Right cardiac atrium (tissue), 5 donors: ENCODE measurements at regions of chr18 and their contacts with region 1.

Region 1: GRCh38 chr18:8367217-8367988 is 241.8 kb upstream of the RAB12 start:
- DNase-seq: peak; percentile 27 to 71 (median 70)
- ATAC-seq: peak; percentile 23 to 62
- H3K4me3 ChIP-seq: peak overlapping the region; percentile 0
- H3K27ac ChIP-seq: no peak overlapping the region
- H3K4me1 ChIP-seq: no peaks in the 10 kb centered on the region
- H3K27me3 ChIP-seq: no peaks in the 10 kb centered on the region

Region 2: DNA sequence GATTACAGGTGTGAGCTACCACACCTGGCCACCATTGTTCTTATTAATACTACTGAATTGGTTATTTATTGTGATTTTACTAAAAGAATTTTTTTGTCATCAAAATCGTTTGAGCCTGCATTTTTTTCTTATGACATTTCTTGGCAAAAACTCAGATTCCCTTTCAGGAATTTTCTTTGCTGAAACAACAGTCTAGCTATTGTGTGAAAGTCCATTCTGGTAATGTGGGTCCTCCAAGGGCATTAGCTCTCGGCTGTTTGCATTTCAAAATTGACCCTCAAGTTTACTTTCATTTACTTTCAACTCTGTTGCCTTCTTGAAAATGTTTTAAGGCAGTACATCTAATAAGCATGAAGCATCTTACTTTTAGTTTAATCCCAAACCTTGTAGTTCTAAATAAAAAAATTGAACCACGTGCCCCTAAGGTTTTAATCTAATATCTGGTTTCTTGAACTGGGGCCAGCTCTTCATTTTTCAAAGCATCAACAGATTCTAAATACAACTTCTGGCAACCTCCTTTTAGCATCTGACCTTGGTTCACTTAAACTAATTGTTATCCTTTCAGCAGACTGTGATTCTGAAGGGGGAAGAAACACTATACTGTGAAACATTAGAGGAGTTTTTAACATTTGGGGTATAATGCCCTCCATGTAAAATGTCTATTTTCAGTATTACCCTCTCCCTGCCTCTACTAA is 83.4 kb before region 1 on chr18:
- intact Hi-C with region 1: loop called in 1 of 4 experiments (anchors 10 kb)
- DNase-seq: no peak
- ATAC-seq: no peak
- H3K4me3 ChIP-seq: no peak overlapping the region
- H3K27ac ChIP-seq: no peak overlapping the region
- H3K4me1 ChIP-seq: peaks cover 4% of the 10 kb centered on the region
- H3K27me3 ChIP-seq: no peaks in the 10 kb centered on the region